ENCODE measurements at regions of chr18 and their contacts with region 1.

Region 1: DNA sequence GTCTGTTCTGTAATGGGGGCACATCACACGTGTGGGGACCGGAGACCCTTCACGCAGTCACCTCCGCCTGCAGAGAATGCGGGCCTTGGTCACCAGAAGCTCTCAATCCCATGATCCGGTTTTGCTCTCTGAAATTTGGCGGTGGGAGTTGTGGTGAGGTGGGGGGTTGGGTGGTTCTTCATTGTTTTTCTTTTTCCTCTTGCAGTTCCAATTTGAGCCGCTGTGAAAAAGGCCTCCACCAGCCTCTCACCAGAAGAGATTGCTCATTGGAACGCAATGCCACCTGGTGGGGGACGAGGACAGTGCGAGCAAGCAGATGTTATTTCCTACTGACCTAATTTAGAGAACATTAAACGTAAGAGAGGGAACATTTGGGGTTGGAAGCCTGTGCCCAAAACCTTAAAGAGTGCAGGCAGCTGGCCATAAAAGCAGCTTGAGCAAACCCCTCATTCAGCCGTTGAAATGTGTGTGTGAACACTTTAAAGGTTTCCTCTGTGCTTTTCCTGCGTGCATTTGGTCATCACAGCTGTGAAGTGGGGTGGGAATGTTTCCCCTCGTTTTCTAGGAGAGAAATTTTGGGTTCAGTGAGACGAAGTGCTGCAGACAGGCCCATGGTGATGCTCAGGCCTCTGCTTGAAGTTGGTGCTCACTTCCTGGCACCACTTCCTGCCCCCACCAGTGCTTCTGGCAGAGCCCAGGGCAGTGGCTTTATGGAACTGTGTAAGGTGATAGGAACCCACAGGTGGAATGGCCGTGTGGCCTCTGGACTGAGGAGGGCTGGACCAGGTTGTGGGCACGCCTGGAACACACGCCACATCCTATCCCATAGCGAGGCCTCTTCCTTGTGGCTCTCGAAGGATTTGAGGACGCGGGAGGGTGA is 61.7 kb downstream of the ZCCHC2 start:
- DNase-seq: peak; percentile 61
- ATAC-seq: peak; percentile 95
- H3K4me3 ChIP-seq: peak overlapping the region; percentile 3; the same call in 1 of the 2 replicates
- H3K27ac ChIP-seq: no peak overlapping the region
- H3K4me1 ChIP-seq: peaks cover 20% of the 10 kb centered on the region
- H3K27me3 ChIP-seq: no peaks in the 10 kb centered on the region
- CTCF ChIP-seq: peak; percentile 94 to 99 (median 99); a peak in 5 of 6 replicates
- EP300 ChIP-seq: no peak
- POLR2A ChIP-seq: no peak
- RAD21 ChIP-seq: peak; percentile 96

Region 2: GRCh38 chr18:62324917-62325805 is 259.3 kb before region 1 on chr18 and contains the start of gene TNFRSF11A:
- CTCF ChIA-PET with region 1: interaction called, 6 read pairs
- POLR2A ChIA-PET with region 1: no interaction called
- RAD21 ChIA-PET with region 1: no interaction called
- SMC1A ChIA-PET with region 1: no interaction called
- in situ Hi-C with region 1: no loop called
- intact Hi-C with region 1: loop called (anchors 10 kb)
- DNase-seq: no peak
- ATAC-seq: peak; percentile 82
- H3K4me3 ChIP-seq: peak within 1 kb of the TSS; percentile 78
- H3K27ac ChIP-seq: no peak within 1 kb of the TSS
- H3K4me1 ChIP-seq: peaks cover 15% of the 10 kb centered on the region
- H3K27me3 ChIP-seq: peaks cover 0 to 13% of the 10 kb centered on the region in 2 experiments; a peak in 1 of 4 replicates
- CTCF ChIP-seq: peak; percentile 20 to 48 (median 47); a peak in 3 of 6 replicates
- EP300 ChIP-seq: no peak
- POLR2A ChIP-seq: no peak
- RAD21 ChIP-seq: peak; percentile 36
- polyA plus RNA-seq, gene TNFRSF11A: 0.07 to 0.10 TPM

Region 3: DNA sequence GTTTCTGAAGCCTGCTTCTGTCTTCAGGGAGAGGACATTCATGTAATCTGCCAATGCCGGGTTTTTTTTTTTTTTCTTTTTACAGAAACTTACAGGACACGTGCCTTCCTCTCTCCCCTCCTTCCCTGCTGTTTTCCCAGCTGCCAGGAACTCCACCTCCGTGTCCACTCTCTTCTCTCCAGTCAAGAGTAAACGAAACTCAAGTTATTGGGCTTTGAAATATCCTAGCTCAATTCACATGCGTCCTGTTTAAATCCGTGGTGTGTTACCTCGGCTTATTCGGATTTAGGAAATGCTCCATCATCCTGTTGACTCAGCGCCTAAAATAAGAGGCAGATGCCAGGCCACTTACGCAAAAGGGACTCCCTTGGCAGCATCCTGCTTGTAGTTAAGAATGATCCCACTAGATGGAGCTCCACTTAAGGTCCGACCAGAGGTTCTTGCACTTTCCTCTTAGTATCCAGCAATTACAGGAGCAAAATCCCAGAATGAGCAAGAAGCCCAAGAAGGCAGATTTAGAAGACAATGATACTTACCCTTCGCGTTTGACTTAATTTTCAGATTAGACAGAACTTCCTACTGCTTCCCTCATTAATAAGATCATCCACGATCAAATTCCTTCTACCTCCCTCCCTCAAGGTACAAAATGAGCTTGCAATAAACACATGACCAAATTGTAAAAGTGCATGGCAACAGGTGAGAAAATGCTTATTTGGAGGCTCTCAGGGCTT is 158.9 kb before region 1 on chr18:
- CTCF ChIA-PET with region 1: interaction called, 19 read pairs
- POLR2A ChIA-PET with region 1: no interaction called
- RAD21 ChIA-PET with region 1: interaction called, 16 read pairs
- SMC1A ChIA-PET with region 1: interaction called, 30 read pairs
- in situ Hi-C with region 1: no loop called
- intact Hi-C with region 1: loop called (anchors 1 kb)
- DNase-seq: no peak
- ATAC-seq: peak; percentile 81
- H3K4me3 ChIP-seq: no peak overlapping the region
- H3K27ac ChIP-seq: no peak overlapping the region
- H3K4me1 ChIP-seq: peaks cover 3% of the 10 kb centered on the region
- H3K27me3 ChIP-seq: peaks cover 0 to 5% of the 10 kb centered on the region in 2 experiments; a peak in 1 of 4 replicates
- CTCF ChIP-seq: peak; percentile 78 to 82 (median 82)
- EP300 ChIP-seq: no peak
- POLR2A ChIP-seq: no peak
- RAD21 ChIP-seq: peak; percentile 87

Region 4: DNA sequence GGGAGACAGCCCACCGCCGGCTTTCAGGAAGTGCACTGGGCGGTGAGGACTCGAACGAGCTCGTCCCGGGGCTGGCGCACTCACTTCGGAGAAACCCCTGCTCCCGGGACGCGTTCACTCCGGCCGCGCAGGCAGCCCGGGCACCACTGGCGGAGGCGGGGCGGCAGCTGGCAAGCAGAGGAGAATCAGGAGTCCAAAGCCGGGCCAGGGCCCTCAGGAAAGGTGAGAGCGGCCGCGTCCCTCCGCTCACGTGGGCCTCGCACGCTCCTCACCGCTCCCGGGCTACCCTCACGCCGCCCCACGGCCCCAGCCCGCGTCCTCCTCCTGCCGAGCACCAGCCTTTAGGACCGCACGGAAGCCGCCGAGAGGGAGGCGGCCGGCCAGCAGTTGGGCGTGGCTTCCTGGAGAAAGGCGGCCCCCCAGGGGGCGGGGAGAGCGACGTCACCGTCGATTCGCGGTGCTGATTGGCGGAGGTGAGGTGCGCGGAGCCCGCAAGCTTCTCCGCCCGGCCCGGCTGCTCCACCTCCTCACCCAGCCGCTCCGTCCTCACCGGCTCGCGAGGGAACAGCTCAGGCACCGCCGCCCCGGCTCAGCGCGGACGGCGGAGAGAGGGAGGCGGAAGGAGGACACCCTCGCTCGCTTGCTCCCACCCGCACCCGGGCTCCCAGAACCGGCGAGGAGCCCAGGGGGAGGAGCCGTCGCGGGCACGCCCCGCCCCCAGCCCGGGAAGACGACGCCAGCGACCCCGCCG is 61.8 kb before region 1 on chr18 and contains the start of gene ZCCHC2:
- CTCF ChIA-PET with region 1: interaction called, 3 read pairs
- POLR2A ChIA-PET with region 1: no interaction called
- RAD21 ChIA-PET with region 1: interaction called, 3 read pairs
- SMC1A ChIA-PET with region 1: interaction called, 7 read pairs
- in situ Hi-C with region 1: no loop called
- intact Hi-C with region 1: loop called (anchors 1 kb)
- DNase-seq: peak; percentile 90
- ATAC-seq: peak; percentile 75
- H3K4me3 ChIP-seq: peak within 1 kb of the TSS; percentile 74
- H3K27ac ChIP-seq: peak within 1 kb of the TSS; percentile 66
- H3K4me1 ChIP-seq: no peaks in the 10 kb centered on the region
- H3K27me3 ChIP-seq: peaks cover 0 to 3% of the 10 kb centered on the region in 2 experiments; a peak in 2 of 4 replicates
- CTCF ChIP-seq: no peak
- EP300 ChIP-seq: no peak
- POLR2A ChIP-seq: peak; percentile 90
- RAD21 ChIP-seq: no peak
- polyA plus RNA-seq, gene ZCCHC2: 1.7 to 2.7 TPM

Region 5: GRCh38 chr18:62571648-62572047 is 12.8 kb before region 1 on chr18:
- CTCF ChIA-PET with region 1: interaction called, 19 read pairs
- POLR2A ChIA-PET with region 1: no interaction called
- RAD21 ChIA-PET with region 1: no interaction called
- SMC1A ChIA-PET with region 1: interaction called, 7 read pairs
- in situ Hi-C with region 1: no loop called
- intact Hi-C with region 1: no loop called
- DNase-seq: no peak
- ATAC-seq: no peak
- H3K4me3 ChIP-seq: no peak overlapping the region
- H3K27ac ChIP-seq: no peak overlapping the region
- H3K4me1 ChIP-seq: no peaks in the 10 kb centered on the region
- H3K27me3 ChIP-seq: no peaks in the 10 kb centered on the region
- CTCF ChIP-seq: no peak
- EP300 ChIP-seq: no peak
- POLR2A ChIP-seq: no peak
- RAD21 ChIP-seq: no peak

Region 6: DNA sequence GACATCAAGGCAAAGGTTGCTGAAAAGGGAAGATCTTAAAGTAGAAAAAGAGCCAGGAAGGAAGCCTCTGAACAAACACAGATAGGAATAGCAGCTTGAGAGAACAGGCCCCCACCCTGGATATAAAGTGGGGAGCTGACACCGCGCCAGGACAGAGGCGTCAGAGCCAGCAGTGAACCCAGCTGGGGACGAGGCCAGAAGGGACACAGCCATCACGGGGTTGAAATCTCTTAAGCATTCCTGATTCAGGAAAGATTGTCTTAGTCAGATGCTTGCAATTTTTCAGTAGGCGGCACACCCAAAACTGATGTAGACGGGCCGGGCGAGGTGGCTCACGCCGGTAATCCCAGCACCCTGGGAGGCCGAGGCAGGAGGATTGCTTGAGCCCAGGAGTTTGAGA is 37.1 kb after region 1 on chr18:
- CTCF ChIA-PET with region 1: no interaction called
- POLR2A ChIA-PET with region 1: no interaction called
- RAD21 ChIA-PET with region 1: no interaction called
- SMC1A ChIA-PET with region 1: no interaction called
- in situ Hi-C with region 1: no loop called
- intact Hi-C with region 1: no loop called
- DNase-seq: no peak
- ATAC-seq: no peak
- H3K4me3 ChIP-seq: no peak overlapping the region
- H3K27ac ChIP-seq: no peak overlapping the region
- H3K4me1 ChIP-seq: no peaks in the 10 kb centered on the region
- H3K27me3 ChIP-seq: no peaks in the 10 kb centered on the region
- CTCF ChIP-seq: no peak
- EP300 ChIP-seq: no peak
- POLR2A ChIP-seq: no peak
- RAD21 ChIP-seq: no peak

Region 7: DNA sequence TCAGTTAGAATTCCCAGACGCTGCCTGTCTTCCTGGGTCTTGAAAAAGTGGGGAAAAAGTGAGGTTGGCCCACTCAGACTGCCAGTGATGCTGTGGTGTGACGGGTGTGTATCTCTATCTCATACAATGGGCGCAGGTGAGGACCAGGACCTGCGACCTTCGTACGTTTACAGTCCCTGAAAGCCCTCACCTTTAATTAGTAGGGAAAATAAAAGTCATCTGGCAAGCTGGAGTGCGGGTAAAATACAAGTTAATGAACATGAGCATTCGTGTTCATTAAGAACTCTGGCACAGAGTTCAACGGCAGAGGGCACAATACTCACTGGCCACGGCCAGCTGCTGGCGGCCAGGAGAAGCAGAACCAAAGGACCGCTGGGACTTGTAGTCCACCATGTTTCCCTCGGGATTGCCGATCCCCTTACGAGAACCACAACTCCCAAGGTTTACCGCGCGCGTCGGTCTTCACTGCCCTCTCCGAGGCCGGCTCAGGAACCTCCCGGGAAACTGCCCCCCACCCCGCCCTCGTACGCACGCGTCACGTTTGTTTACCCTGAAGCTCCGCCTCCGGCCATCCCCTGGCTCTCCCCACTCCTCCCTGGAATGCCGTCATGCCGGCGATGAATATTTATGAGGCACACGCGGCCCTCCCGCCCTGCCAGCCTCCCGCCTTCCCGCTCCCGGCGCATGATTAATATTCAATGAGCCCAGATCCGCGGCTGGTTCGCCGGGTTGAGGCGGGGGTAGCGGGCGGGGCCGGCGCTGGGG is 130.4 kb after region 1 on chr18:
- CTCF ChIA-PET with region 1: interaction called, 15 read pairs
- POLR2A ChIA-PET with region 1: no interaction called
- RAD21 ChIA-PET with region 1: interaction called, 8 read pairs
- SMC1A ChIA-PET with region 1: interaction called, 6 read pairs
- in situ Hi-C with region 1: no loop called
- intact Hi-C with region 1: loop called (anchors 5 kb)
- DNase-seq: peak; percentile 93
- ATAC-seq: peak; percentile 83
- H3K4me3 ChIP-seq: peak overlapping the region; percentile 79
- H3K27ac ChIP-seq: no peak overlapping the region
- H3K4me1 ChIP-seq: 0 out of 2 replicates have a peak, but pooled peaks cover 2% of the 10 kb centered on the region
- H3K27me3 ChIP-seq: no peaks in the 10 kb centered on the region
- CTCF ChIP-seq: peak; percentile 73 to 86 (median 78)
- EP300 ChIP-seq: peak in 1 of 2 experiments; percentile 31; a peak in 1 of 4 replicates
- POLR2A ChIP-seq: no peak; the same call in 1 of the 2 replicates
- RAD21 ChIP-seq: peak; percentile 79

Region 8: GRCh38 chr18:62792016-62792415 is 207.5 kb after region 1 on chr18:
- CTCF ChIA-PET with region 1: no interaction called
- POLR2A ChIA-PET with region 1: no interaction called
- RAD21 ChIA-PET with region 1: no interaction called
- SMC1A ChIA-PET with region 1: no interaction called
- in situ Hi-C with region 1: no loop called
- intact Hi-C with region 1: no loop called
- DNase-seq: no peak
- ATAC-seq: no peak
- H3K4me3 ChIP-seq: no peak overlapping the region
- H3K27ac ChIP-seq: no peak overlapping the region
- H3K4me1 ChIP-seq: no peaks in the 10 kb centered on the region
- H3K27me3 ChIP-seq: no peaks in the 10 kb centered on the region
- CTCF ChIP-seq: no peak
- EP300 ChIP-seq: no peak
- POLR2A ChIP-seq: no peak
- RAD21 ChIP-seq: no peak

Region 9: GRCh38 chr18:62982600-62983251 is 398.2 kb after region 1 on chr18:
- CTCF ChIA-PET with region 1: interaction called, 66 read pairs
- POLR2A ChIA-PET with region 1: no interaction called
- RAD21 ChIA-PET with region 1: interaction called, 5 read pairs
- SMC1A ChIA-PET with region 1: interaction called, 22 read pairs
- in situ Hi-C with region 1: no loop called
- intact Hi-C with region 1: loop called (anchors 1 kb)
- DNase-seq: peak; percentile 7
- ATAC-seq: peak; percentile 88
- H3K4me3 ChIP-seq: no peak overlapping the region
- H3K27ac ChIP-seq: no peak overlapping the region
- H3K4me1 ChIP-seq: no peaks in the 10 kb centered on the region
- H3K27me3 ChIP-seq: no peaks in the 10 kb centered on the region
- CTCF ChIP-seq: peak; percentile 75 to 82 (median 78)
- EP300 ChIP-seq: no peak
- POLR2A ChIP-seq: no peak
- RAD21 ChIP-seq: peak; percentile 98

Measured in GM12878 (cell line).